ENCODE measurements at regions of chr9 and their contacts with region 1.

Region 1: DNA sequence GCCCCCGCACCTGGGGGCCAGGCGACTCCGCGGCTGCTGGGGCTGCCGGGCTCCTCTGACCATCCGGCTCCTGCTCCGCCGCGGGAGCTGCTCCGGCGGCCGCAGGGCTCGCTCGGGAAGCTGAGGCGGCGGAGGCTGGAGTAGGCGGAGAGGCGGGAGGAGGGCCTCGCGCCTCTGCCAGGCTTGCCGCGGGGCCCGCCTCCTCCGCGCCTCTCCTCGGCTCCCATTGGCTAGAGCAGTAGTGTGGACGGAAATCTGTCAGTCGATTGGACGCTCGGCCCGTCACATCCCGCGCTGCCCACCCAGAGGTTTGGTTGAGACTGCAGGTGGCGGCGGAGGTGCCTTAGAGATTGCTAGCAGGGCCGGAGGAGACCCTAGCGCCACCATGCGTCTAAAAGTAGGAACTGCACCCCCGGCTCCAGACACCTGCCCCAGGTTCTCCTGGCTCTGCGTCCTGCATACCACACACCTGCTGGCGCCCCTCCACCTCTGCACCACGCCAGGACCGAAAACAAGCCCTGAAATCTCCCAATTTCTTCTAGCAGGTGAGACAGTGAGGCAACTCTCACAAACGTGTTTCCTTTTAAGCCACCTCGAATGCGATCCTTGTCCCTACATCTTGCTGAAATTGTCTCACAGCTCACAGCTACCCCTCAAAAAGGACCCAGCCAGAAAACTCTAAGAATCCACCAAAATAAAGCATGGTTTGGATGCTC is at the start of gene SCAI:
- DNase-seq: peak; percentile 98
- H3K4me3 Mint-ChIP-seq: peak within 1 kb of the TSS; percentile 96
- H3K27ac Mint-ChIP-seq: peak within 1 kb of the TSS; percentile 85
- H3K4me1 Mint-ChIP-seq: peaks cover 46% of the 10 kb centered on the region
- H3K27me3 Mint-ChIP-seq: no peaks in the 10 kb centered on the region
- total RNA-seq, gene SCAI: 10.0 and 11.7 TPM in 2 replicates

Region 2: GRCh38 chr9:124852829-124853531 is 290.6 kb before region 1 on chr9 and contains the start of gene WDR38:
- intact Hi-C with region 1: loop called (anchors 2 kb)
- DNase-seq: peak; percentile 79
- H3K4me3 Mint-ChIP-seq: peak within 1 kb of the TSS; percentile 68
- H3K27ac Mint-ChIP-seq: no peak within 1 kb of the TSS
- H3K4me1 Mint-ChIP-seq: peaks cover 16% of the 10 kb centered on the region
- H3K27me3 Mint-ChIP-seq: peaks cover 9% of the 10 kb centered on the region
- total RNA-seq, gene WDR38: not detected in 2 replicates

Region 3: GRCh38 chr9:124868511-124869465 is 274.7 kb before region 1 on chr9:
- intact Hi-C with region 1: loop called (anchors 1 kb)
- DNase-seq: peak; percentile 93
- H3K4me3 Mint-ChIP-seq: peak overlapping the region; percentile 99
- H3K27ac Mint-ChIP-seq: peak overlapping the region; percentile 100
- H3K4me1 Mint-ChIP-seq: peaks cover 56% of the 10 kb centered on the region
- H3K27me3 Mint-ChIP-seq: peaks cover 1% of the 10 kb centered on the region

Region 4: DNA sequence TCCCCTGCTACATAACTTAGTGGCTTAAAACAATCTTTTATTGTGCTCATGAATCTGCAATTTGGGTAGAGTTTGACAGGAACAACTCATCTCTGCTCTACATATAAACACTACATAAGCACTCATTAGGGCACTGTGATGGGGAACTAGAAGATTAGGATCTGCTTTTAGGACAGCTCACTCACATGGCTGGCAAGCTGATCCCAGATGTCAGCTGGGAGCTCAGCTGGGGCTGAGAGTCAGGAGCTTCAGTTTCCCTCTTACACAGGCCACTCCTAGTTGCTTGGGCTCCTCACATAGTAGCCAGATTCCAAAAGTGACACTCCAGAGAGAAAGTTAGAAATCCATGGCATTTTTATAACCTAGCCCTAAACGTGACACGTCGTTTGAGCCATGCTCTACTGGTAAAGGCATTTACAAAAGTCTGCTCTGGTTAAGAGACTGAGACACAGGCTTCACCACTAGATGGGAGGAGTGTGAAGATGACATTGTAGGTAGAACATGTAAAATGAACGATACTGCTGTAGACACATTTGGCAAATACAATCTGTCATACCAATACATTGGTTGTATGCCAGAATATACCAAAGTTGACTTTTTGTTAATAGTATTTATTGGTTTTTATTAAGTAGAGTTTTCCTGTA is 23.8 kb before region 1 on chr9:
- intact Hi-C with region 1: loop called (anchors 1 kb)
- DNase-seq: no peak
- H3K4me3 Mint-ChIP-seq: no peak overlapping the region
- H3K27ac Mint-ChIP-seq: peak overlapping the region; percentile 48
- H3K4me1 Mint-ChIP-seq: peaks cover 36% of the 10 kb centered on the region
- H3K27me3 Mint-ChIP-seq: no peaks in the 10 kb centered on the region

Region 5: DNA sequence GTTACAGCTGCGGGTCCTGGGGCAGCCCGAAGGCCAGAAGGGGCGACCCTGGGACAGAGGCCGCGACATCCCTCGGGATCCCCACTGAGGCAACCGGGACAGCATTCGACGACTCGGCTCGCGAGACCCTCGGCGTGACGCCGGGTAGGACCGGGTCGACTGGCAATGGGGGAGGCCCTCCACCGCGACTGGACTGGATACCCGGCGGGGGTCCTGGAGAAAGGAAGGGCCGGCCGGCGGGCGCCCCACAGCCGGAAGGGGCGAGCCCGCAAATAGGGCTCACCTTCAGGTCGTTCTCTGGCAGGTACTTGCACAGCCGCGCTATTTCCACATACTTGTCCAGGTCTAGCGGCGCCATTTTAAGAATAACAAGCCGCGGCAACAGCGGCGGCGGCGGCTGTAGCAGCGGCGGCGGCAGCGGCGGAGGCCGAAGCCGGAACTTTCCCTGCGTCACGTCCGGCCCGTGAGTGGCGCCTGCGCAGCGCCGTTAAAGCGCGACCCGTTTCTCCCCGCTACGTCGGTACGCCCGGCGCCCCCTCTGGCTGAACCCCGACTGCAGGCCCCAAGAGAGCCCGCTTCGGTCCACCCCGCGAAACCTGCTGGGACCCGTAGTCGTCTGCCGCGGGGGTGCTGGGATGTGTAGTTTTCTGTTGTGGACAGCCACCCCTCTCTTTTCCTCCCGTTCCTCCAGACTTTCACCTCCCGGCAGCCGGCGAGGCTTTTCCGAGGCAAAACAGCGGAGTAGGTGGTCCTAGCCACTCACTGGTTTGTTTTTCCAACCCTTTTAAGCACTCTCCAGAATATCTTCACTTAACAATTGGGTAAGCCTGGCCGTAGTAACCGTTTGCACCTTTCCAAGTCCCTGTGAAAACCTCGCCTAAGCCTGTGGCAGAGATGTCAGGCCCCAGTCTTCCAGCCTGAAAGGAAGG is 46.1 kb after region 1 on chr9 and contains the start of gene PPP6C:
- intact Hi-C with region 1: loop called (anchors 1 kb)
- DNase-seq: peak; percentile 96
- H3K4me3 Mint-ChIP-seq: peak within 1 kb of the TSS; percentile 96
- H3K27ac Mint-ChIP-seq: peak within 1 kb of the TSS; percentile 88
- H3K4me1 Mint-ChIP-seq: peaks cover 33% of the 10 kb centered on the region
- H3K27me3 Mint-ChIP-seq: no peaks in the 10 kb centered on the region
- total RNA-seq, gene PPP6C: 47.2 and 50.8 TPM in 2 replicates

Region 6: GRCh38 chr9:125202846-125203618 is 59.5 kb after region 1 on chr9:
- intact Hi-C with region 1: no loop called
- DNase-seq: no peak
- H3K4me3 Mint-ChIP-seq: no peak overlapping the region
- H3K27ac Mint-ChIP-seq: no peak overlapping the region
- H3K4me1 Mint-ChIP-seq: peaks cover 15% of the 10 kb centered on the region
- H3K27me3 Mint-ChIP-seq: no peaks in the 10 kb centered on the region

Region 7: DNA sequence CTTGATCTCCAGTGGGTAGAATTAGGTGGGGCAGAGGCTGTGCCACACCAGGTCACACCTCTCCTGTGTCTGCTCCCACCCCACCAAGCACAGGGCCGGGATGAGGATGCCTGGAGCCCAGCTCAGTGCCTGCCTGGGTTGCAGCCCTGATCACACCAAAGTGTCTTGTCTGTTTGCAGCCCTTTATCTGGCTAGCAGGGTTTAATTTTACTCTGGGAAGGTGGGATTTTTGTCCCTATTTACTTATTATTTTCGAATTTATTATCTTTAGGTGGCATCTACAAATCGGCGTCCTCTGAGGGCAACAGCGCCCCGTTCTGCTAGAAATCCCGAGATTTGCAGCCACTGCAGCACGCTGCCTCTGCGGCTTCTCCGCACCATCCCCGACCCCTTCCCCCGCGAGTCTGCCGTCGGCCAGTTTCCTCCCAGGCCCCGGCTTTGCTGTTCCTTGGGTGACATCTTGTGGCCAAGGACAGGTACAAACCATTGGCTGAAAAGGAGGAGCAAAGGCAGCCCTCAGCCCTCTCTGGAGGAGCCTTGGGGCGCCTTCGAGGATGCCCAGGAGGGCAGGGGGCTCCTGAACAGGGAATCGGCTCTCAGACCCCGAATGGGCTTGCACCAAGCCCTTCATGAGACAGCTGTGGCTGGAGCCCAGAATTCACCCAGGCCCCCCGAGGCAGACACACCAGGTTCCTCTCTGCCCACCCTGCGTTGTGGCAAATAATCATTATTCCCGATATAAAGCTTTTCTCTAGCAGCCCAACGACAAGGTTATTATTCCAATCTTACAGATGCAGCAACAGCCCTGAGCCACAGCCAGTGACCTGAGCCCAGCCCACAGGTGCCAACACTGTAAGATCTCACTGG is 231.1 kb after region 1 on chr9:
- intact Hi-C with region 1: loop called (anchors 5 kb)
- DNase-seq: peak; percentile 62
- H3K4me3 Mint-ChIP-seq: peak overlapping the region; percentile 45
- H3K27ac Mint-ChIP-seq: no peak overlapping the region
- H3K4me1 Mint-ChIP-seq: no peaks in the 10 kb centered on the region
- H3K27me3 Mint-ChIP-seq: peaks cover 6% of the 10 kb centered on the region

Measured in activated T-helper 1 cell treated with anti-CD3 and anti-CD28 coated beads, Interleukin-12 subunit alpha, Interleukin-12 subunit beta, Interleukin-2, Interleukin-4 antibody, amounts not matched to agents 30 ng/mL and 10 ng/mL and 1 ng/mL, durations not matched to agents 14 hours and 24 hours and 36 hours (primary cell).